ENCODE measurements at regions of chr10 and their contacts with region 1.

Region 1: GRCh38 chr10:121608469-121609190 is 10.4 kb upstream of the FGFR2 start:
- DNase-seq: peak; percentile 25
- H3K4me3 ChIP-seq: peak overlapping the region; percentile 56
- H3K27ac ChIP-seq: no peak overlapping the region
- H3K4me1 ChIP-seq: peaks cover 5% of the 10 kb centered on the region
- H3K27me3 ChIP-seq: peaks cover 78% of the 10 kb centered on the region
- CTCF ChIP-seq: peak; percentile 89

Region 2: DNA sequence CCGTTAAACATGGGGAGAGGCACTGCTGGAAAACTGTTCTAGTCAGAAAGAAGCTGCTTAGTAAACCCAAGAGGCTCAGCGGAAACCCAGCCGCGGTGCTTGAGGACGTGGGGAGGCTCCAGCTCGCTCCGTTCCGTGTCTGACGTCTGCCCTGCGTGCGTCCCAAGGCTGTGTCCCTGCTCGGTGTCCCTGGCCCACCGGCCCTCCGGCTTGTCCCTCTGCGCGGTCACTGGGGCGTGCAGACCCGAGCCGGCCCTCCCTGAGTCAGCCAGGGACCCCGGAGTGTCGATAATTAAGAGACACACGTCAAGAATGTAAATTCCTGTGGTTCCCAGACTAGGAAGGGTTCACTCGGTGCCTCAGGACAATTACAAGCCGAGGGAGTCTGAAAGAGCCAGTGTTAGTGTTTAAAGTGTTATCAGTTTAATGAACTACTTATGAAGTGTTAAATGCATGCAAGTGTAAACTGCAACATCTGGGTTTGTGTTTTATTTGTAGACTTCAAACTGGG is 658.5 kb before region 1 on chr10:
- intact Hi-C with region 1: loop called (anchors 10 kb)
- DNase-seq: no peak
- H3K4me3 ChIP-seq: peak overlapping the region; percentile 62
- H3K27ac ChIP-seq: no peak overlapping the region
- H3K4me1 ChIP-seq: peaks cover 13% of the 10 kb centered on the region
- H3K27me3 ChIP-seq: peaks cover 72% of the 10 kb centered on the region
- CTCF ChIP-seq: no peak

Region 3: GRCh38 chr10:121662945-121663917 is 54.6 kb after region 1 on chr10:
- intact Hi-C with region 1: no loop called
- DNase-seq: no peak
- H3K4me3 ChIP-seq: no peak overlapping the region
- H3K27ac ChIP-seq: no peak overlapping the region
- H3K4me1 ChIP-seq: peaks cover 8% of the 10 kb centered on the region
- H3K27me3 ChIP-seq: peaks cover 8% of the 10 kb centered on the region
- CTCF ChIP-seq: no peak